Aorta (tissue), 5 donors: ENCODE measurements at regions of chr9 and their contacts with region 1.

Region 1: DNA sequence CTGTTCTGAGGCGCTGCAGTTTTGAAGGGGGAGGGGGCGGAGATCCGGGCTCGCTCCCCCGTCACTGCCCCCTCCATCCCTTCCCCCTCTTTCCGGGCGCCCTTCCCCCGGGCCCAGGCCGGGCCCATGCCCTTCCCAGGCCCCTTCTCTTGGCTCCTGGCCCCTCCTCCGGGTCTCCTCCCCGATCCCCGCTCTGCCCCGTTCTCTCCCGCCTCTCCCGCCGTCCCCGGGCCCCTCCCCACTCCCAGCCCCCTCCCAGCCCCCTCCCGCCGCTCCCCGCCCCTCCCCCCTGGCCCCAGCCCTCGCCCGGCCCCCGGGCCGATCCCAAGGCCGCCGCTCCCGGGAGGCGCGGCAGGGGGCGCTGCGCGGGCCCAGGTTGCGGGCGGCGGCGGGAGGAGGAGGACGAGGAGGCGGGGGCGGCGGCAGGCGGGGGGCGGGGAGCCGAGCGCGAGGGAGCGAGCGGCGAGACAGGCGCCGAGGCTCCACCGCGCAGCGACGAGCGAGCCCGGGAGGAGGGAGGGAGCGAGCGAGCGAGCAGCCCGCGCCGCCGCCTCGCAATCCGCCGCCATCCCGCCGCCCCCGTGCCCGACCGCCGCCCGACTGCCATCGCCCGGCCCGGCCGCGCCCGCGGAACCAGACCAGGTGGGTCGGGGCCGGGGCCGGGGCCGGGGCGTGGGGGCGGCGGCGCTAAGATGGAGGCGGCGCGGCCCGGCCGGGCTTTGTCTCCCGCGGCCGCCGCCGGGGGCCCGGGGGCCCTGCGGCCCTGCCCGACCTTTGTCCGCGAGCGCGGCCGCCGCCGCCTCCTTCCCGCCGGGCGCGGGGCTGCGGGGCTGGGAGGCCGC is at the start of gene PRRC2B:
- DNase-seq: peak; percentile 89 to 96
- ATAC-seq: peak; percentile 87
- H3K4me3 ChIP-seq: peak within 1 kb of the TSS; percentile 100
- H3K27ac ChIP-seq: peak within 1 kb of the TSS; percentile 86 to 100
- H3K4me1 ChIP-seq: peaks cover 4 to 12% of the 10 kb centered on the region in 2 donors
- H3K27me3 ChIP-seq: no peaks in the 10 kb centered on the region
- total RNA-seq, gene PRRC2B: 200 to 263 TPM

Region 2: DNA sequence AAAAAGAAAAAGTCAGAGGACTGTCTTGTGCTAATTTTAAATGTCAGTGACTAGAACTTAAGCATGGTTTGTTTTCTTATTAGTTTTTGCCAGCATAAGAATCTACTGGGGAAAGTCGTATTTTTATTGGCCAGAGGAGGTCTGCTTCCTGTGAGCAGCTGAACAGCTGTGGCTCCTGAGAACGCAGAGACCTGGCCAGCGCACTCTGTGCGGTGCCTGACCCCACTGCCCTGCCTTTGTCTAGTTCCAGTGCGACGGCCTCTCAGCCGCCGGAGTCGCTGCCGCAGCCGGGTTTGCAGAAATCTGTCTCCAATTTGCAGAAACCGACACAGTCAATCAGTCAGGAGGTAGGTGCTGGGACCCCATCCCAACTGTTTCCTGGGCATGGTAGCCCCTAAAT is 42.5 kb after region 1 on chr9:
- intact Hi-C with region 1: loop called (anchors 2 to 5 kb)
- DNase-seq: peak; percentile 65 to 81
- ATAC-seq: peak; percentile 81
- H3K4me3 ChIP-seq: no peak overlapping the region
- H3K27ac ChIP-seq: no peak overlapping the region
- H3K4me1 ChIP-seq: no peaks in the 10 kb centered on the region
- H3K27me3 ChIP-seq: no peaks in the 10 kb centered on the region